PC-3 (cell line): ENCODE measurements at regions of chr20 and their contacts with region 1.

Region 1: GRCh38 chr20:16476032-16476431 is 97.2 kb downstream of the KIF16B start:
- DNase-seq: peak; percentile 86
- ATAC-seq: peak; percentile 77
- H3K4me3 ChIP-seq: no peak overlapping the region
- H3K27ac ChIP-seq: no peak overlapping the region
- H3K4me1 ChIP-seq: peaks cover 39% of the 10 kb centered on the region
- H3K27me3 ChIP-seq: no peaks in the 10 kb centered on the region
- CTCF ChIP-seq: peak; percentile 87

Region 2: DNA sequence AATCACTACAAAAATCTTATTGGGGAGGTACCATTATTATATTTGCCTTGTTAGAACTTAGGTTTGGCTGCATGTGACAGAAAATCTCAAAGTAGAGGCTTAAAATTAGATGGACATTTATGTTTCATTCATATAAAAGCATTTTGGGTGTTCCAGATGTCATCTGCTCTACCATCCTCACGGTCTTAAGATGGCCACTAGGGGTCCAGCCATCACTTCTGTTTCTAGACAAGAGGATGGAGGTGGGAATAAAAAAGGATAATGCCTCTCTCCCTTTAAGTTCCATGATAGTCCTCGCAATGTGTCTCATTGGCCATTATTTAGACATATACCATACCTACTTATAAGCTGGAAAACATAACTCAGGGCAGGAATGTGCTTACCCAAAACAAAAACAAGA is 832.3 kb before region 1 on chr20:
- CTCF ChIA-PET with region 1: no interaction called
- POLR2A ChIA-PET with region 1: no interaction called
- intact Hi-C with region 1: loop called (anchors 5 kb)
- DNase-seq: peak; percentile 51
- ATAC-seq: peak; percentile 72; the same call in 1 of the 2 replicates
- H3K4me3 ChIP-seq: no peak overlapping the region
- H3K27ac ChIP-seq: no peak overlapping the region
- H3K4me1 ChIP-seq: peaks cover 4% of the 10 kb centered on the region
- H3K27me3 ChIP-seq: no peaks in the 10 kb centered on the region
- CTCF ChIP-seq: peak; percentile 80

Region 3: DNA sequence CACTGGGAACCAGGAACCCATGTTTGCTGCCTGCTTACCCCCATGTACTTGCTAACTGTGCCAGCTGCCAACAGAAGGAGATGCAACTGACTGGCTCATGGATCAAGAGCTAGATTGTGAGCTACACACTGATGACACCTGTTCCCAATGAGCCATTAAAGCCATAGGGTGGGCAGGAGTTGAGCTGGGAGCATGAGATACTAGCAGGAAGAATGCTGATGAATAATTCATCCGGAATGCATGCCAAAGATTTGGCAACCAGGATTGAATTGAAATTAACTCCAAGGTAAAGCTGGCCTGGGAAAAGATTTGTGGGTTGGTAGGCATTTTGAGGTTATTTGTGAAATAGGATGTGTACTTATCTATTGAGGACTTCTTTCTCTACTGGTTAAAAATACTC is 533.9 kb before region 1 on chr20:
- CTCF ChIA-PET with region 1: no interaction called
- POLR2A ChIA-PET with region 1: no interaction called
- intact Hi-C with region 1: loop called (anchors 5 kb)
- DNase-seq: peak; percentile 97
- ATAC-seq: peak; percentile 96
- H3K4me3 ChIP-seq: no peak overlapping the region
- H3K27ac ChIP-seq: peak overlapping the region; percentile 10; the same call in 1 of the 2 replicates
- H3K4me1 ChIP-seq: peaks cover 15% of the 10 kb centered on the region
- H3K27me3 ChIP-seq: no peaks in the 10 kb centered on the region
- CTCF ChIP-seq: no peak

Region 4: GRCh38 chr20:16279320-16279719 is 196.7 kb before region 1 on chr20:
- CTCF ChIA-PET with region 1: interaction called, 5 read pairs
- POLR2A ChIA-PET with region 1: no interaction called
- intact Hi-C with region 1: loop called (anchors 1 kb)
- DNase-seq: peak; percentile 55
- ATAC-seq: peak; percentile 71
- H3K4me3 ChIP-seq: no peak overlapping the region
- H3K27ac ChIP-seq: no peak overlapping the region
- H3K4me1 ChIP-seq: no peaks in the 10 kb centered on the region
- H3K27me3 ChIP-seq: no peaks in the 10 kb centered on the region
- CTCF ChIP-seq: peak; percentile 61

Region 5: GRCh38 chr20:16350465-16350864 is 125.6 kb before region 1 on chr20:
- CTCF ChIA-PET with region 1: no interaction called
- POLR2A ChIA-PET with region 1: no interaction called
- intact Hi-C with region 1: loop called (anchors 5 kb)
- DNase-seq: peak; percentile 92
- ATAC-seq: peak; percentile 95
- H3K4me3 ChIP-seq: no peak overlapping the region
- H3K27ac ChIP-seq: peak overlapping the region; percentile 33
- H3K4me1 ChIP-seq: peaks cover 12% of the 10 kb centered on the region
- H3K27me3 ChIP-seq: no peaks in the 10 kb centered on the region
- CTCF ChIP-seq: no peak

Region 6: DNA sequence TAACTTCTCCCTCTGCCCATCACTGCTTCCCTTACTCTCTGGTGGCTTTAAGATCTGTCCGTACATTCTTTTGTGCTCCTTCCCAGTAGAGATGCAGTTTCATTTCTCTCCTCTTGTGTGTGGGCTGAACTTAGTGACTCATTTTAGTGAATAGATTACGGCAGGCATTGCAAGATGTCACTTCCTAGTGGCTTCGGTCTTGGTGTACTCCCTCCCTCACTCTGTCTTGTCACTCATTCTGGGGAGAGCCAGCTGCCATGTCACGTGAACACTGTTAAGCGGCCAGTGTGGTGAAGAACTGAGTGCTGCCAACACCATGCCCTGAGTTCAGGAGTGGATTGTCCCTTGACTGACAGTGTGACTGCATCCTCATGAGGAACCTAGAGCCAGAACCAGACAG is 388.0 kb after region 1 on chr20:
- CTCF ChIA-PET with region 1: no interaction called
- POLR2A ChIA-PET with region 1: no interaction called
- intact Hi-C with region 1: no loop called
- DNase-seq: peak; percentile 14
- ATAC-seq: no peak
- H3K4me3 ChIP-seq: no peak overlapping the region
- H3K27ac ChIP-seq: no peak overlapping the region
- H3K4me1 ChIP-seq: no peaks in the 10 kb centered on the region
- H3K27me3 ChIP-seq: 0 out of 2 replicates have a peak, but pooled peaks cover 8% of the 10 kb centered on the region
- CTCF ChIP-seq: no peak